KBM-7 (cell line): ENCODE measurements at regions of chr18 and their contacts with region 1.

Region 1: GRCh38 chr18:62982600-62983251 is 267.4 kb downstream of the PHLPP1 start:
- DNase-seq: peak; percentile 68

Region 2: GRCh38 chr18:62186774-62187542 is 795.8 kb before region 1 on chr18 and contains the starts of genes PIGN and RELCH:
- in situ Hi-C with region 1: loop called (anchors 25 kb)
- DNase-seq: peak; percentile 97

Region 3: DNA sequence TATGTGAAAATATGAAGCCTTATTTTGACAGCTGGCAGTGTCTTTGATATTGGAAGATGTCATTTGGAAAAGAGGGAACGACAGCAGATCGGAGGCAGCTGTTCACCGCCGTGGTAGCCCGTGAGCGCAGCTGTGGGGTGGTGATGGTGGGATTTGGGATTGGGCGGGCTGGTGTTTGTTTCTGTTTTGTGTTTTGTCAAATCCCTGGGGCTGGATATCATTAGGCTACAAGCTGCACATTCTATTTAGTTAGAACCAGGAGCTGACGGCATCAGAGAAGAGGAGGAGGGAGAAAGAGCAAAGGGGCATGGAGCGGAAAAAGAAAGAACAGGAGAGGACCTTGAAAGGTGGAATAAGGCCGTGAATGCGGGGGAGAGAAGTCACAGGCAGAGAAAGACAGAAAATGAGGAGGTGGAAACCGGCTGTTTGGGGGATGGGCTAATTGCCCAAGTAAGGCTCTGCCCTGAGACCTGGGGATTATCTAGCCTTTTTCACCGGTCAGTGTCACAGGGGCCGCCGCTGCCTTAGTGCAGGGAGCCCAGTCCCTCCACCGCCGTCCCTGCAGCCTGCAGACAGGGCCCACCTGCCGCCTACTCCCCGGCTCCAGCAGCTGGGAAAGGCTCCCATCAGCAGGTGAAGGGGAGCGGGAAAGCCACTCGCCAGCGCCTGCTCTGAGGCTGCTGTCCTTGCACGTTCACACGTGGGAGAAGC is 371.9 kb before region 1 on chr18:
- in situ Hi-C with region 1: loop called (anchors 25 kb)
- DNase-seq: no peak

Region 4: DNA sequence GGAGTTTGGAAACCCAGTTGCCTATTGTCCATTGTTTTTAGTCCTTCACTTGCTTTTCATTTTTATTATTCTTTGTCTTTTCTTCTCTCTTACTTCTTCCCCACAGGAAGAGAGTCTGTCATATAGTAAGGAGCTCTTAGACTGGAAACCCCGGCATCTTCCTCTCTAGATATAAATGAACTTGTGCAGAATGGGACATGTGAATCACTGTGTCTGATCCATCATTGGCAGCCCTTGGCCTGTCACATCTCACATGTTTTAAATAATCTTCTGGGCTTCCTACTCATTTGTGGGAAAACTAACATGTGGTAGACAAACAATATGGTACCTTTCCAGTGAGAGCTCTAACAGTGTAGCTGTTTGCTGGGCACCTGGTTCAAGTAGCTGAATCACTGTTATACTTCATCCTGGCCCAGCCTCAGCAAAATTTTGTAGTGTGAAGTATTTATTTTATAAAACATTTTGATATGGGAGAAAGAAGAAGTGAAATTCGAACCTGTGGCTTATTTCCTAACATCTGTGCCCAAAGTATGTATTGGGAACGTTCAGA is 154.6 kb before region 1 on chr18:
- in situ Hi-C with region 1: no loop called
- DNase-seq: no peak

Region 5: DNA sequence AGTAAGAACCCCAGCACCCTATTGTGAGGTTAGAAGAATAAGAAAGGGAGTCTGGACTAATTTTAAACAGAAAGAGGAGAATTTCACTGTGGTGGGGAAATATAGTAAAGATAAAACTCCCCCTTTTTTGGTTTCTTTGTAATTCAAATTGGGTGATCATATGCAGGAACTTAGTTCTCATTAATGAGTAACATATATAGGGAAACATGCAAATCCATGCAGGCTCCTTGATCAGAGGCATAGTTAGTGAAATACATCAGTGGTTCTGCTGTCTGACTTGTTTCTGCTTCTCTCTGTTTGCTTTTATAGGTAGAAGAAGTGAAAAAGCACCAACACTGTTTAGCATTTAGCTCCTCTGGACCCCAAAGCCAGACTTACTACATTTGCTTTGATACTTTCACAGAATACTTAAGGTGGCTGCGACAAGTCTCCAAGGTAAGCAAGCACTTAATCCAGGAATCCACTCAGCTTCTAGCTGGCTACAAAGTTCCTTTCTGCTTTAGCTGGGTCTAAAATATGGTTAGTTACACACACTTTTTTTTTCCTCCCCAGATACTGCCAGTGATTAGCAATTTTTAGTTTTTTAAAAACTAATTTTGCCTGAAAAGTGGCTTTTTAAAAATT is 144.1 kb before region 1 on chr18:
- in situ Hi-C with region 1: no loop called
- DNase-seq: no peak

Region 6: GRCh38 chr18:63119647-63120046 is 136.9 kb after region 1 on chr18:
- in situ Hi-C with region 1: no loop called
- DNase-seq: peak; percentile 49